ENCODE measurements at regions of chr22 and their contacts with region 1.

Region 1: DNA sequence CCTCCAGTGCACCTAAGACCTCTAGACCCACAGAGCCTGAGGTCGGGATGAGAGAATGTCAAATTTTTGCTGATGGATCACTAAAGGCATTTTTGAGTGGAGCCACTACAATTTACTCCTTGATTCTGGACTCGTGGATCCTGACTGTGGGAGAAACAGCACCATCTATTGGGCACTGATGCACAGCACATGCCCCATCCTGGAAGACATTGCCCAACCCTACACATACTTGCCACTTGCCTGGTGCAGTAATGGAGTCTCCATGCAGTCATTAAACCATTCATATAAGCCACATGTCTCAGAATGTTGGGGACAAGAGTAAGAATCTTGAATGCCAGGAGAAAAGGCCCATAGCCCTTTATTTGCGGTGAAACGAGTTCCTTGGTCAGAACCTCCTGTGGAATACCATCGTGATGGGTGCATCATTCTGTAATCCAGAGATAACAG is 103.9 kb downstream of the GGTLC2 start:
- DNase-seq: peak; percentile 31 to 77
- ATAC-seq: peak in 2 of 3 donors; percentile 65 to 80
- H3K4me3 ChIP-seq: no peak overlapping the region
- H3K4me3 Mint-ChIP-seq: peak overlapping the region; percentile 75
- H3K27ac ChIP-seq: no peak overlapping the region
- H3K27ac Mint-ChIP-seq: peak overlapping the region; percentile 75 to 82
- H3K4me1 ChIP-seq: peaks cover 50% of the 10 kb centered on the region
- H3K4me1 Mint-ChIP-seq: peaks cover 54 to 56% of the 10 kb centered on the region in 2 donors
- H3K27me3 ChIP-seq: no peaks in the 10 kb centered on the region
- H3K27me3 Mint-ChIP-seq: peaks cover 0 to 2% of the 10 kb centered on the region in 2 donors
- CTCF ChIP-seq: peak; percentile 84

Region 2: DNA sequence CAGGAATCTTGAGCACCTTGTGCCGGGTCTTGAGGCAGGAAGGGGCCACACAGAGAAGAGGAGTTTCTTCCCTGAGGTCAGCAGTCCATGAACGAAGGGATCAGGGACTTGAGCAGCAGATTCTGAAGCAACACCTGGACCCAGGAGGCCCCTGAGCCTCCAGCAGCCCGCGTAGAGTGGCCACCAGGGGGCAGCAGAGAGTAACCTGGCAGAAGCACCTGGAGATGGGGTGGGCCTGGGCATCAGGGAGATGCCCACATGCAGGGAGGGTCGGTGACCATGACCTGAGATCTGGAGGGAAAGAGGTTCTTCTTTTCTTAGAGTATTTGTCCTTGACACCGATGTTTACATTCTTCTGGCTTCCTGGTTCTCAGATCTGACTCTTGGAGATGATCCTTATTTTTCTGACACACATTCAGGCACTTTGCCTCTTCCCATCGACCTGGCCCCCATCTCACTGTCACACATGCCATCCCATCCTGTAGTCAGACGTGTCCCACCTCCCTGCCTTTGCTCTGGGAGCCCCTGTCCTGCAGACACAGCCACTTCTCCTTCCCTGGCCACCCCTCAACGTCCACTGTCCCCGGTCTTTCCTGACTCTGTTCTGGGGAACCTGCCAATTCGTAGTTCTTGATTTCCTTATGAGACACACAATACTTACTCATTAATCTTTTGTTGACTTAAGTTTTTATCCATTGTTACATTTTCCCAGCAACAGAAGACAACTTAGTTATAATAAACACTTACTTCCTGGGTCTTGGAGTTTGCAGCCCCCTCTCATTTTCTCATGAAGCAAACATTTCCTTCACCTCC is 37.4 kb before region 1 on chr22:
- intact Hi-C with region 1: loop called (anchors 5 kb)
- DNase-seq: peak; percentile 82 to 86
- ATAC-seq: peak; percentile 57 to 82 (median 81)
- H3K4me3 ChIP-seq: no peak overlapping the region
- H3K4me3 Mint-ChIP-seq: peak overlapping the region; percentile 55
- H3K27ac ChIP-seq: no peak overlapping the region
- H3K27ac Mint-ChIP-seq: peak overlapping the region; percentile 8 to 60
- H3K4me1 ChIP-seq: peaks cover 23% of the 10 kb centered on the region
- H3K4me1 Mint-ChIP-seq: peaks cover 0 to 14% of the 10 kb centered on the region in 2 donors
- H3K27me3 ChIP-seq: no peaks in the 10 kb centered on the region
- H3K27me3 Mint-ChIP-seq: no peaks in the 10 kb centered on the region
- CTCF ChIP-seq: peak; percentile 99

Region 3: DNA sequence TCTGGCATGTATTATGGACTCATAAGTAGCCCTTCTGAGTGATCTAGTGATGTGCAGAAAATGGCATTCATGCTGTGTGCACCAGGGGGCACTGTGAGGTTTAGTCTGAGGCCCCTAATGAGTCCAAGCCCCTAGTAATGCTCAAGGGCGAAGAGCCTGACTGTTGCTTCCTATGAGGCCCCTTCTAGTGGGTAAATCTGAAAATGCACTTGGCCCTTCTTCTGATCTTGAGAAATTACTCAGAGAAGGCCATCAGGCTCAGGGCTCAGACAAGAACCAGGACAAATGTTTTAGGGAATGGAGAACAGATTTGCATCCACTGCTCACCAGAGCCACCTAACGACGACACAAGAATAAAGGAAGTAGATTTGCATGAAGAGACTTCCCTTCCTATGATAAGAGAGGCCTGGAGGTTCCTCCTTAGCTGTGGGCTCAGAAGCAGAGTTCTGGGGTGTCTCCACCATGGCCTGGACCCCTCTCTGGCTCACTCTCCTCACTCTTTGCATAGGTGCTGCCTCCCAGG is 28.1 kb before region 1 on chr22:
- intact Hi-C with region 1: loop called (anchors 1 kb)
- DNase-seq: peak; percentile 48 to 77
- ATAC-seq: peak; percentile 64 to 78 (median 73)
- H3K4me3 ChIP-seq: no peak overlapping the region
- H3K4me3 Mint-ChIP-seq: peak overlapping the region; percentile 6
- H3K27ac ChIP-seq: peak overlapping the region; percentile 86
- H3K27ac Mint-ChIP-seq: peak overlapping the region; percentile 80 to 92
- H3K4me1 ChIP-seq: peaks cover 41% of the 10 kb centered on the region
- H3K4me1 Mint-ChIP-seq: peaks cover 47 to 54% of the 10 kb centered on the region in 2 donors
- H3K27me3 ChIP-seq: no peaks in the 10 kb centered on the region
- H3K27me3 Mint-ChIP-seq: no peaks in the 10 kb centered on the region
- CTCF ChIP-seq: peak; percentile 77

Measured in natural killer cell (primary cell).